Lower leg skin (tissue), 4 donors: ENCODE measurements at regions of chr7 and their contacts with region 1.

Region 1: DNA sequence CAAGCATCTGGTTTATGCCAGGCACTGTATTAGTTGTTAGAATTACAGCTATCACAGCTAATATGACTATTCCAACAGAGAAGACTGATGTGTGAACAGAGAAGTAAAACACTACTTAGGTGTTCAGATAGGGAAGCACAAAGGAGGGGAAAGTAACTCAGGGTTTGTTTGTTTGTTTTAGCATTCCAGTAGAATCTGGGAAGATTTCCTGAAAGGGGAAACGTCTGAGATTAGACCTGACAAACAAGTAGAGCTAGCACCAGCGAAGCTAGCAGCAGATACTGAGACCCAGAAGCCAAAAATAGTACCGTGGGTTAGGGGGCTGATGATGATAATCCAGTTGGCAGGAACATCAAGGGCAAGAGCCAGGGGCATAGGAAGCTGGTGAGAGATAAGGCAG is 28.8 kb upstream of the KLHL7 start:
- DNase-seq: no peak
- H3K4me3 ChIP-seq: no peak overlapping the region
- CTCF ChIP-seq: no peak
- POLR2A ChIP-seq: no peak

Region 2: DNA sequence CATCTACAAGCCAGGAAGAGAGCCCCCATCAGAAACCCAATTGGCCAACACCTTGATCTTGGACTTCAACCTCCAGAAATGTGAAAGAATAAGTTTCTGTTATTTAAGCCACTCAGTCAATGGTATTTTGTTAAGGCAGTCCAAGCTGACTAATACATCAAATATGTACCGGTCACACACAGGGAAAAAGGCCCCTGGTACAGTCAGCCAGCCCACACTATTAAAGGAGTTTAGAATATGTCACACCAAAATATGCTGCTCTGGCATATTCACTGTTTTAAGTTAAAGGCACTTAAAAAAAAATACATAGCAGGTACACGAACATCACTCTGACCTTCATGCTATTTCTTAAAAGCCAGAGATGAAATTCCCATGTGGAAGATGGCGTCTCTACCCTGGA is 1115.9 kb before region 1 on chr7:
- intact Hi-C with region 1: loop called (anchors 5 kb)
- DNase-seq: no peak
- H3K4me3 ChIP-seq: no peak overlapping the region
- CTCF ChIP-seq: no peak
- POLR2A ChIP-seq: no peak

Region 3: DNA sequence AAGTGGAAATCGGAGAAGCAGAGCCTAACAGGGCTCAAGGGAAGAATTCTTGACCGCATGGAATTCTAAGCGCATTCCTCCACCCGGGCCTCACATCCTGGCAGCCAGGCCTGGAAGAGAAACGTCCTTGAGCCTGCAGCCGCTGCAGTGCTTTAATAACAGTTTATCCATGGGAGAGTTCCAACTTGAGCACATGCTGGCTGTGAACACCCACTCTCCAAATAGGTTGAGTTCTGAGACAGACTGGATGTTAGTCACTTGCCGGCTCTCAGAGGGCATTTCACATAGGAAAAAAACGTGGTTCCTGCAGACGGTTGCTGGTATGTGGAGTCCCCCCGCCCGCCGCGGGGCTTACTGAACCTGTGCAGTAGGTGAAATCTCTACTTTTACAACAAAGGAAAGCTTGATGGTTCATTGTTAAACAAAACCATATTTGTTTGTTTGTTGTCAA is 515.4 kb before region 1 on chr7:
- intact Hi-C with region 1: no loop called
- DNase-seq: peak; percentile 77 to 92
- H3K4me3 ChIP-seq: no peak overlapping the region
- CTCF ChIP-seq: no peak
- POLR2A ChIP-seq: no peak

Region 4: DNA sequence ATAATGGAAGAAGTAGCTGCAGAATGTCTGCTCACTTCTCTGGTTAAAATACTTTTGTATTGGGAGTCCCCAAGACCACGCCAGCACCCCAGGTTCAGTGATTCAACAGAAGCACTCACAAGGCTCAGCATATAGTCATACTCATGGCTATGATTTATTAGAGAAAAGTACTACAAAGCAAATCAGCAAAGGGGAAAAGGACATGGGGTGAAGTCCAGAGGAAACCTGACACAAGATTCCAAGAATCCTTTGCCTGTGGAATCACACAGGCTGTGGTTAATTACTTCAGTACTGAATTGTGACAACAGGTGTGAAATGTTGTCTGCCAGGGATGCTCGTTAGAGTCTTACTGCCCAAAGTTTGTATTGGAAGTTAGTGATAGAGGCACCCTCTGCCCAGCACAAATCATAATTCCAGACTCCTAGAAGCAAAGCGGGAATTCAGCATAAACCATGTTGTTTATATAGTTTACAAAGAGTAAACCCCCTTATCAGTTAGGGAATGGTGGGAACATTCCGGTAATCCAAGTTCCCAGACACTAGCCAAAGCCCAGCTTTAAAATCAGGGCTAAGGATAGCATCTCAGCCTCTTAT is 142.2 kb before region 1 on chr7:
- intact Hi-C with region 1: no loop called
- DNase-seq: no peak
- H3K4me3 ChIP-seq: no peak overlapping the region
- CTCF ChIP-seq: no peak
- POLR2A ChIP-seq: no peak

Region 5: DNA sequence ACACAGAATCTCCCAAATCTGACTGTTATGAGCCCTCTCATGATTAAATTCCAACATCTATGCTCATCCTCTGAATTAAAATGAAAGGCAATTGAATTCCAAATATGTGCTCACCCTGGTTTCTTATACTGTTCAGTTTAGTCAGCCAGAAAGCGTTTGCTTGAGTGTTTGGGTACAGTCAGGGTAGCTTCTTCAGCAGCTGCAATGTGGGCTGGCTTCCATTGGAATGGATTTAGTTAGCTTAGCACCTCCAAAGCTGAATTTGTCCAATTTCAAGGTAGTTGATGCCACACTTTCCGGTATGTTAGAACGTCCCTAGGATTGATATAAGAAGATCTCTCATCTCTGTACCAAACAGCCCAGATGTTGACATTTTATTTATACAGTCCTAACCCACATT is 38.1 kb after region 1 on chr7:
- intact Hi-C with region 1: no loop called
- DNase-seq: no peak
- H3K4me3 ChIP-seq: no peak overlapping the region
- CTCF ChIP-seq: no peak
- POLR2A ChIP-seq: no peak